Gastrocnemius medialis (tissue), 4 donors: ENCODE measurements at regions of chr3 and their contacts with region 1.

Region 1: DNA sequence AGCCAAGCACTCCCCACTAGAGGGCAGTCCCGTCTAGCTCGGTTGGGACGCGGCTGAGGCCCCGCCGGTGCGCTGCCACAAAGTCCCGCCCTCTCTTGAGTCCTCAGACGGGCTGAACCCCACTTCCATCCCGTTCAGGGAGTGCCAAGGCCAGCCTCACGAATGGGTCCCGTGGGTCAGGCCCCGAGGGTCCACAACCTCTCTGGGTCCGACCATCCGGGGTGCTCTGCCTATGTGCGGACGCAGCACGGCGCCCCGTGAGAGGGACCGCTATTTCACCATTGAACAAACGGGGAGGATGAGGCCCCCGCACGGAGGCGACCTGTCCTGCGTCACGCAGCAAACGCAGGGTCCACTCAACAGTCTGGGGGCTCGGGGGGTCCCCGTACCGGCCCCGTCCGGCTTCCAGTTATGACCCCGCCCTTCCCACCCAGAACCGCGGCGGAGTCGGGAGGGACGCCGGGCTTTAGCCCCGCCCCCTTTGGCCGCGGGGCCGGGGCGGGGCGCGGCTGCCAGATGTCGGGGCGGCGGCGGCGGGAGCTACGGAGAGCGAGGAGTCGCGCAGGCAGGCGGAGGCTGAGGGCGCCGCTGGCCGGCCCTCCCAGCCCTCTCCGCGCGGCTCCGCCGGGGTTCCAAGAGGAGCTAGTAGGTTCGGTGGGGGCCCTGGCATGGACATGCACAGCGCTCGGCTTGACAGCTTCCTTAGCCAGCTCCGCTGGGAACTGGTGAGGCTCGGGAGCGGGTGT is at the start of gene INKA1:
- DNase-seq: peak; percentile 80 to 86
- ATAC-seq: peak; percentile 68 to 82
- H3K4me3 ChIP-seq: peak within 1 kb of the TSS; percentile 83 to 99 (median 88)
- H3K27ac ChIP-seq: peak within 1 kb of the TSS; percentile 89 to 97 (median 93)
- H3K4me1 ChIP-seq: peaks cover 40 to 45% of the 10 kb centered on the region in 2 donors
- H3K27me3 ChIP-seq: no peaks in the 10 kb centered on the region
- CTCF ChIP-seq: peak; percentile 84 to 96 (median 94)
- POLR2A ChIP-seq: peak; percentile 88 to 89
- total RNA-seq, gene INKA1: 1.1 to 10.9 (median 5.2) TPM in 3 of 4 donors, not detected in the other

Region 2: DNA sequence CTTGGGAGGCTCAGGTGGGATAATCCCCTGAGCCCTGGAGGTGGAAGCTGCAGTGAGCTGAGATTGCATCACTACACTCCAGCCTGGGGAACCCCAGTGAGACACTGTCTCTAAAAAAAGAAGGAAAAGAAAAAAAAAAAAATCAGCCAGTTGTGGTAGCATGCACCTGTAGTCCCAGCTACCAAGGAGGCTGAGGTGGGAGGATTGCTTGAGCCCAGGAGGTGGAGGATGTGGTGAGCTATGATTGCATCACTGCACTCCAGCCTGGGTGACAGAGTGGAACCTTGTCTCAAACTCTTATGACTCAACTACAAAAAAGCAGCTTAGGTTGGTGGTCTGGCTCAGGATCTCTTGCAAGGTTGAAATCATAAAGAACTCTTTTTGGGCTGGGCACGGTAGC is 425.4 kb before region 1 on chr3:
- in situ Hi-C with region 1: no loop called
- intact Hi-C with region 1: no loop called
- DNase-seq: no peak
- ATAC-seq: peak in 1 of 2 donors; percentile 12
- H3K4me3 ChIP-seq: no peak overlapping the region
- H3K27ac ChIP-seq: peak overlapping the region in 1 of 4 donors; percentile 12
- H3K4me1 ChIP-seq: peaks cover 0 to 19% of the 10 kb centered on the region in 2 donors
- H3K27me3 ChIP-seq: no peaks in the 10 kb centered on the region
- CTCF ChIP-seq: no peak
- POLR2A ChIP-seq: no peak

Region 3: GRCh38 chr3:49673715-49674496 is 129.0 kb before region 1 on chr3 and contains the start of gene APEH:
- in situ Hi-C with region 1: no loop called
- intact Hi-C with region 1: no loop called
- DNase-seq: peak; percentile 93 to 98
- ATAC-seq: peak; percentile 86 to 88
- H3K4me3 ChIP-seq: peak within 1 kb of the TSS; percentile 80 to 98 (median 92)
- H3K27ac ChIP-seq: peak within 1 kb of the TSS; percentile 91 to 96 (median 94)
- H3K4me1 ChIP-seq: peaks cover 16 to 17% of the 10 kb centered on the region in 2 donors
- H3K27me3 ChIP-seq: no peaks in the 10 kb centered on the region
- CTCF ChIP-seq: peak in 1 of 5 experiments; percentile 10
- POLR2A ChIP-seq: peak; percentile 75 to 82
- total RNA-seq, gene APEH: 103 to 140 (median 108) TPM

Region 4: GRCh38 chr3:49723628-49724551 is 79.0 kb before region 1 on chr3 and contains the start of gene GMPPB:
- in situ Hi-C with region 1: no loop called
- intact Hi-C with region 1: loop called (anchors 2 kb)
- DNase-seq: peak; percentile 96 to 98
- ATAC-seq: peak; percentile 82
- H3K4me3 ChIP-seq: peak within 1 kb of the TSS; percentile 79 to 99 (median 92)
- H3K27ac ChIP-seq: peak within 1 kb of the TSS; percentile 88 to 100 (median 96)
- H3K4me1 ChIP-seq: peaks cover 27 to 38% of the 10 kb centered on the region in 2 donors
- H3K27me3 ChIP-seq: no peaks in the 10 kb centered on the region
- CTCF ChIP-seq: no peak
- POLR2A ChIP-seq: peak; percentile 78 to 83
- total RNA-seq, gene GMPPB: 14.2 to 26.1 (median 17.0) TPM

Region 5: DNA sequence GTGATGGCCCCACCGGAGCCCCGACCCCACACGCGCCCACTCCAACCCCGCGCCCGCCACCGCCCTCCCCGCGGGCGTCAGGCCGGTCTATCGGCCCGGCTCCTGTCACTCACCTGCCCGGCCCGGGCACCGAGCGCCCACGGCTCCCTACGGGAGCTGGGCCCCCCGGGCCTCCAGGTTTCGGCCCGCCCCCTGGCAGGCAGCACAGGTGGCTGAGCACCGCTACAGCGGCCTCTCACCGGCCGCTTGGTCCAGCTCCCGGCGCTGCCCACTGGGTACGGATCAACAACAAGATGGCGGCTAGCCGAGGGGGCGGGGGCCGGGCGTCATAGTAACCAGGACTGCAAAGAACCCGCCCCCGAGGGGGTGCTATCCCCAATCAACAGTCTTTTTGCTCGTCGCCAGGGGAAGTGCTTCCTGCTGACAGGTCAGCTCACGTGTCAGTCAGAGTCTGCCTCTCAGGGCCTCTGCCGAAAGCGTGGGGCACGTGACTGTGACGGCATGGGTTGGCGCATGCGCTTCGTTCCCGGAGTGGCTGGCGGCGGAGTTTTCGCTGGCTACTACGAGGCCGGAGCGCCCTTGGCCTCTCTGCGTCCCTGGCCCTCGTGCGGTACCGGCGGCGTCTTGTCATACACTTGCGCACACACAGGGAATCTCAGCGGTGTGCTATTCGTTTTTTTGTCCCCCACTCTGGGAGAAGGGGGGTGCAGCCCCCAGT is 16.5 kb before region 1 on chr3 and contains the start of gene IP6K1:
- in situ Hi-C with region 1: no loop called
- intact Hi-C with region 1: loop called (anchors 1 kb)
- DNase-seq: peak; percentile 100
- ATAC-seq: peak; percentile 99 to 100
- H3K4me3 ChIP-seq: peak within 1 kb of the TSS; percentile 77 to 93 (median 86)
- H3K27ac ChIP-seq: peak within 1 kb of the TSS; percentile 90 to 97 (median 94)
- H3K4me1 ChIP-seq: peaks cover 10 to 21% of the 10 kb centered on the region in 2 donors
- H3K27me3 ChIP-seq: no peaks in the 10 kb centered on the region
- CTCF ChIP-seq: no peak
- POLR2A ChIP-seq: peak; percentile 60 to 79
- total RNA-seq, gene IP6K1: 13.5 to 22.2 (median 19.5) TPM

Region 6: DNA sequence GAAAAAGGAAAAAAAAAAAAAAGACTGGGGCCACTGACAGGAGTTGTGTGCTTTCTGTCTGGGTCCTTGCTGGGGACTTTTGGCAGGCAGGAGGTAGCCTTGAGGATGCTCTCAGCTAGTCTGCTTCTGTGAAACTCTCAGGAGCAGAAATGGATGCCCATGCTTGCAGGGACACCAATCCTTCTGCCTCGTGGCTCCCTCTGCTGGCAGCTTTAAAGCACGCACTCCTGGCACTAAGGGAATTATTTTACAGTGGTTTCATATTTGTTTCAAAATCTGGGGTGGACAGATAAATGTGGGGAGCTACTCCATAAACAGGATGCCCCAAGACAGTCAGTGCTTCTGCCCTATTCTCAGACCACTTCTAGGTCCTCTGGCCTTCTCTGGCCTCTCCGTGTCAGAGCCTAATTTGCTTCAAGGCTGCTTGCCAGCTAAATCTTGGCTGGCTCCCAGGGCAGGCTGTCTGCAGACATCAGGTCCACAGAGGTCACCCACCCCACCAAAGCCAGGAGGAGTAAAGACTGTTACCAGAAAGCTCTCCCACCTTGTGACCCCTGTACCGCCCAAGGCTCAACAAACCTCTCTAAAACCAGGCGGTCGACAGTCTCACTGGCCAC is 36.4 kb after region 1 on chr3:
- in situ Hi-C with region 1: loop called in 3 of 4 experiments (anchors 5 kb)
- intact Hi-C with region 1: loop called (anchors 1 kb)
- DNase-seq: peak; percentile 56 to 70
- ATAC-seq: peak; percentile 90 to 94
- H3K4me3 ChIP-seq: no peak overlapping the region
- H3K27ac ChIP-seq: peak overlapping the region; percentile 3 to 76 (median 52)
- H3K4me1 ChIP-seq: peaks cover 9 to 18% of the 10 kb centered on the region in 2 donors
- H3K27me3 ChIP-seq: no peaks in the 10 kb centered on the region
- CTCF ChIP-seq: peak; percentile 90 to 94 (median 93)
- POLR2A ChIP-seq: no peak

Region 7: GRCh38 chr3:49906004-49906743 is 103.3 kb after region 1 on chr3:
- in situ Hi-C with region 1: no loop called
- intact Hi-C with region 1: loop called (anchors 5 kb)
- DNase-seq: no peak
- ATAC-seq: peak in 1 of 2 donors; percentile 40
- H3K4me3 ChIP-seq: peak overlapping the region in 3 of 4 donors; percentile 23 to 50 (median 34)
- H3K27ac ChIP-seq: peak overlapping the region; percentile 18 to 59 (median 31)
- H3K4me1 ChIP-seq: peaks cover 4 to 11% of the 10 kb centered on the region in 2 donors
- H3K27me3 ChIP-seq: no peaks in the 10 kb centered on the region
- CTCF ChIP-seq: peak; percentile 31 to 66 (median 55)
- POLR2A ChIP-seq: no peak

Region 8: DNA sequence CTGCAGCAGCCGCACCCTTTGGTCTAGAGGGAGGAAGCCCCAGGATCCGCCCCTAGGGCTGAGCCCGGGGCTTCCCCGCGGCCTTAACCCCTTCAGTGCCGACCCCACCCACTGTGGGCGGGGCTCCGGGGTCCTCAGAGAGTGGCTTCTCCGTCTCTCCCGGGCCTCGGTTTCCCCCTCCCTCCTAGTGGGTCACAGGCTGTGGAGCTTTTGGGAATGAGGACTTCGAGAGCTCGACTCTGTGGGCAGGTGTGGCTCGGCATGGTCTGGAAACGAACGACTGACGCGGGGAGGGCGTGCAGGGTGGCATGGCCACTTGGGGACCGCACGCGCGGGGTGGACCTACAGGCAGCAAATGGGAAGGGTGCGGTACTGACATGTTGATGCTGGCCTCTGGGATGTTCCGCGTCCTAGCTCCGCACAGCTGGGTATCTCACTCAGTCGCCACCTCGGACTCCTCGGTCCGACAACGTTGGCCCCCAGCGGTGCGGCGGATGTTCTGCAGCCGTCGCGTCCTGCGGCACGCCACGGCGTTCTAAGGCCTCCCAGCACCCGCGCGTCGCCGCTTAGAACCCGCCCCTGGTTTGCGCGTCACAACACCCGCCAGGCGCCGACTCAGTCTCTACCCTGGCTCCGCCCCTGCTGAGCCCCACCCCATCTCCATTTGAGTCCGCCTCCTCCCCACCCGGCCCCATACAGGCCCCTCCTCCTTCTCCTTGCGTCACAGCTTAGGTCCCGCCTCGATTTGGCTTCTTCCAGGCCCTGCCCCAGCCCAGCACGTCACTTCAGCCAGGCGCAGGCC is 496.1 kb after region 1 on chr3 and contains the starts of genes HYAL3 and NAA80:
- in situ Hi-C with region 1: no loop called
- intact Hi-C with region 1: no loop called
- DNase-seq: peak; percentile 99 to 100
- ATAC-seq: peak; percentile 87
- H3K4me3 ChIP-seq: peak within 1 kb of the TSS; percentile 66 to 91 (median 76)
- H3K27ac ChIP-seq: peak within 1 kb of the TSS; percentile 85 to 91 (median 88)
- H3K4me1 ChIP-seq: peaks cover 29 to 48% of the 10 kb centered on the region in 2 donors
- H3K27me3 ChIP-seq: no peaks in the 10 kb centered on the region
- CTCF ChIP-seq: peak; percentile 43 to 62 (median 51)
- POLR2A ChIP-seq: peak; percentile 94 to 96
- total RNA-seq, gene HYAL3: 1.1 to 2.3 (median 1.2) TPM in 3 of 4 donors, not detected in the other
- total RNA-seq, gene NAA80: 12.5 to 22.1 (median 14.8) TPM